MCF 10A (cell line): ENCODE measurements at regions of chr1 and their contacts with region 1.

Region 1: GRCh38 chr1:209565759-209566678 is 17.5 kb upstream of the CAMK1G start:
- DNase-seq: peak; percentile 97
- H3K4me3 Mint-ChIP-seq: peak overlapping the region; percentile 49
- H3K27ac Mint-ChIP-seq: no peak overlapping the region
- H3K4me1 Mint-ChIP-seq: peaks cover 62% of the 10 kb centered on the region
- H3K27me3 Mint-ChIP-seq: peaks cover 3% of the 10 kb centered on the region
- CTCF ChIP-seq: peak; percentile 98

Region 2: DNA sequence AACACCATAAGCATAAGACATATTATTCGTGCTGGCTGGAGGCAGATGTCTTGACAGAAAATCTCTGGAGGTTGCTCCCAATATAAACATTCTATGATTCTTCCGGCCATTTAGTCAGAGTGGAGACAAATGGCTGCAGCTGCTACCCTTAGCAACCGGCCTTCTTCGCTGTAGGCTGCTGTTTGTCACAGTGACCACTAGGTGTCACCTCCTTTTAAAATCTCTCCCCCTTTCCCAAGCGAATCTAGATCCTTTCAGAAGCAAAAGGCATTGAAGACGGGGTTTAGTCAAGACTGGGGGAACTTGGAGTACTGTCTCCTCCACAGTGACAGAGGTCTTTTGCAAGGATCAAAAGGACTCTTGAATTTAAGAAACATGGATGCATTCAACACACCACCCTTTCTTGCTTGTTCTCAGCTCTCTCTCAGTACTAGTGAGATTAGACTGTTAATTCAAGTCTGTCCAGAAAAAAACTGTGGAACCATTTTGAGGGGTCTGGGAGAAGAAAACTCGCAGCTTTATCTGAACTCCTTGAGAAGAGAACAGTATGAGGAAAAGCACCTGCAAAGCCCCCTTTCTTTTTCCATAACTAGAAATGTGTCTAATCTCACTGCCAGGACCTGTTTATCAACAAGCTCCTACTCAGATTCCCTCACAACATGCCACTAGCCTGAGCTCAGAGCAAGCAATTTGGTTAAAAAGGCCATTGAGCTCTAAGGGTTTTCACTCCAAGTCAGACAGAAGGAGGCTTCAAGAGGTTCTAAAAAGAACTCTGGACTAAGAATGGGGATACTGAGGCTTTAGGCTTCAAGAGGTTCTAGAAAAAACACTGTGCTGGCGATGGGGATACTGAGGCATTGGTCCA is 913.5 kb before region 1 on chr1:
- CTCF ChIA-PET with region 1: interaction called, 11 read pairs
- POLR2A ChIA-PET with region 1: no interaction called
- intact Hi-C with region 1: loop called (anchors 5 kb)
- DNase-seq: peak; percentile 83
- H3K4me3 Mint-ChIP-seq: no peak overlapping the region
- H3K27ac Mint-ChIP-seq: no peak overlapping the region
- H3K4me1 Mint-ChIP-seq: peaks cover 13% of the 10 kb centered on the region
- H3K27me3 Mint-ChIP-seq: peaks cover 21% of the 10 kb centered on the region
- CTCF ChIP-seq: peak; percentile 98

Region 3: GRCh38 chr1:209398313-209398991 is 167.6 kb before region 1 on chr1:
- CTCF ChIA-PET with region 1: interaction called, 13 read pairs
- POLR2A ChIA-PET with region 1: interaction called, 24 read pairs
- intact Hi-C with region 1: no loop called
- DNase-seq: peak; percentile 100
- H3K4me3 Mint-ChIP-seq: peak overlapping the region; percentile 29
- H3K27ac Mint-ChIP-seq: peak overlapping the region; percentile 79
- H3K4me1 Mint-ChIP-seq: peaks cover 28% of the 10 kb centered on the region
- H3K27me3 Mint-ChIP-seq: no peaks in the 10 kb centered on the region
- CTCF ChIP-seq: no peak

Region 4: GRCh38 chr1:209443971-209444651 is 121.9 kb before region 1 on chr1:
- CTCF ChIA-PET with region 1: interaction called, 105 read pairs
- POLR2A ChIA-PET with region 1: interaction called, 174 read pairs
- intact Hi-C with region 1: no loop called
- DNase-seq: peak; percentile 54
- H3K4me3 Mint-ChIP-seq: no peak overlapping the region
- H3K27ac Mint-ChIP-seq: peak overlapping the region; percentile 17
- H3K4me1 Mint-ChIP-seq: peaks cover 24% of the 10 kb centered on the region
- H3K27me3 Mint-ChIP-seq: no peaks in the 10 kb centered on the region
- CTCF ChIP-seq: no peak

Region 5: GRCh38 chr1:209527993-209528392 is 38.0 kb before region 1 on chr1:
- CTCF ChIA-PET with region 1: interaction called, 198 read pairs
- POLR2A ChIA-PET with region 1: interaction called, 120 read pairs
- intact Hi-C with region 1: no loop called
- DNase-seq: peak; percentile 36
- H3K4me3 Mint-ChIP-seq: no peak overlapping the region
- H3K27ac Mint-ChIP-seq: peak overlapping the region; percentile 60
- H3K4me1 Mint-ChIP-seq: peaks cover 64% of the 10 kb centered on the region
- H3K27me3 Mint-ChIP-seq: no peaks in the 10 kb centered on the region
- CTCF ChIP-seq: no peak

Region 6: DNA sequence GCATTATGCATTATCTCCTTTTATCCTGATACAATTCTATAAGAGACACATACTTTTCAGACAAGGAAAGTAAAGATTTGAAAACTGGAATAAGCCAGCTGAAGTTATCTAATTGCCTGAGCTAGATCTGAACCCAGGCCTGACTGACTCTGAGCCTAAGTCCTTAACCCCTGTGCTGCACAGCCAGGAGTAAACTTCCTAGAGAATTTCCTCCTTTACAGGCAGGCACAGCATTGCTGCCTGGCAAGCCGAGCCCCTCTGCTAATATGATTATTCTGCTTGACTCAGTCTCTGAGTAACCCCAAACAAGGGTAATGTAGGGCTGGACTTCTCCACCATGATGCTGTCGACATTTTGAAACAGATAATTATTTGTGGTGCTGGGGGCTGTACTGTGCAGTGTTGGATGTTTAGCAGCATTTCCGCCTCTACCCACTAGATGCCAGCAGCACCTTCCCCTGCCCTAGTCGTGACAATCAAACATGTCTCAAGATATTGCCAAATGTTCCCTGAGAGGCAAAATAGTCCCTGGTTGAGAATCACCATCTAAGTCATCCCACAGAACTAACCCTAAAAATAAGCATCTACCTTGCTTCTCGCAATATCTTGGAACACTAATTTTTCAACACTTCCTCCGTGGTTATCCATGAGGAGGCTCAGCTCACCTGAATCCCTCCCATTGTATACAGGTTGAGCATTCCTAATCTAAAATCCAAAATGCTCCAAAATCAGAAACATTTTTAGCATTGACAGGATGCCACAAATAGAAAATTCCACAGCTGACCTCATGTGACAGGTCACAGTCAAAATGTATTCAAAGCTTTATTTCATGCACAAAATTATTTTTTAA is 36.0 kb after region 1 on chr1:
- CTCF ChIA-PET with region 1: interaction called, 198 read pairs
- POLR2A ChIA-PET with region 1: interaction called, 3 read pairs
- intact Hi-C with region 1: no loop called
- DNase-seq: peak; percentile 90
- H3K4me3 Mint-ChIP-seq: no peak overlapping the region
- H3K27ac Mint-ChIP-seq: no peak overlapping the region
- H3K4me1 Mint-ChIP-seq: no peaks in the 10 kb centered on the region
- H3K27me3 Mint-ChIP-seq: no peaks in the 10 kb centered on the region
- CTCF ChIP-seq: peak; percentile 92

Region 7: DNA sequence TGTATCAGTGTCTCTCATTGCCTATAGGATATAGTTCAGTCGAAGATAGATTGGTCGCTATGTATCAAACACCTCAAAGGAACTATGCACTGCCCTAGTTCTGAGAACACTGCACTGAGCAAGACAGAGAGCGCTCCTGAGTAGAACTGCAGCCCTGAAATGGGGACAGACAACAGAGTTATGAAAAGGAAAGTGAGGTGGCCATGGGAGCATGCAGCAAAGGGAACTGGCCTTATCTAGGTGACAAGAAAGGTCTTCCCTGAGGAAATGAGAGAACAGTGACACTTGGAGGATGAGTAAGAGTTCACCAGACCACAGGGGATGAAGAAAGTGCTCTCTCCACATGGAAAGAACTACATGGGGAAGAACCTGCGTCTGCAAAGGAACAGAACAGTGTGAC is 101.7 kb after region 1 on chr1:
- CTCF ChIA-PET with region 1: no interaction called
- POLR2A ChIA-PET with region 1: no interaction called
- intact Hi-C with region 1: no loop called
- DNase-seq: no peak
- H3K4me3 Mint-ChIP-seq: no peak overlapping the region
- H3K27ac Mint-ChIP-seq: no peak overlapping the region
- H3K4me1 Mint-ChIP-seq: peaks cover 21% of the 10 kb centered on the region
- H3K27me3 Mint-ChIP-seq: no peaks in the 10 kb centered on the region
- CTCF ChIP-seq: no peak

Region 8: DNA sequence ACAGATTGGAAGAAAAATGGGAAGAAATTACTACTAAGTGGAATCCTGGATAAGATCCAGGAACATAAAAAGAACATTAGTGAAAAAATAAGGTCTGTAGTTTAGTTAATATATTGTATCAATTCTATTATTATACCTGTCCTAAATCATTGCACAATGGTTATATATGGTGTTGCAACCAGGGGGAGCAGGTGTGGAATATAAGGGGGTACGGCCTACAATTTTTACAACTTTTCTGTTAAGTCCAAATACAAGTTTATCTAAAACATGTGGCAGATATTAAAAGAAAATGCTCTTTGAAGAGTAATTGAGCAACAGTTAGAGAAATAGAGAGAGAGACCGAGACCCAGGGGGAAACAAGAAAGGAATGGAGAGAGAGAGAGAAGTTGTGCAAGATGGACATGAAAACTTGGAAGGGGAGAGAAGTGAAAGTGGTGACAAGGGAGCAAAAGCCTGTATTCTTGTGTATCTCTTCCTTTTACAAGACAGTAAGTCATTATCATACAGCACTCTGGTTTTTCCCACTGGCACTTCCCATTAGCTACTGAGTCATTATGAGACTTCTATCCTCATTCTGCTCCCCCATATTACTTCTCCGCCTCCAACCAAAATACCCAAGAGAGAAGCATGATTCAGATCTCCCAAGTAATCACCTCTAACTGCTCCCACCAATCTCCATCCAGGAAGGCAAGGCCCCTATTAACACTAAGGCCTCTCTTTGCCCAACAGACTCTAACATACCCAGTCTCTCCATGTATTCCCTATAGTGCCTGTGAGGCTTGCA is 167.6 kb after region 1 on chr1:
- CTCF ChIA-PET with region 1: interaction called, 10 read pairs
- POLR2A ChIA-PET with region 1: no interaction called
- intact Hi-C with region 1: no loop called
- DNase-seq: no peak
- H3K4me3 Mint-ChIP-seq: no peak overlapping the region
- H3K27ac Mint-ChIP-seq: no peak overlapping the region
- H3K4me1 Mint-ChIP-seq: peaks cover 4% of the 10 kb centered on the region
- H3K27me3 Mint-ChIP-seq: no peaks in the 10 kb centered on the region
- CTCF ChIP-seq: no peak

Region 9: GRCh38 chr1:210360852-210361477 is 794.9 kb after region 1 on chr1:
- CTCF ChIA-PET with region 1: no interaction called
- POLR2A ChIA-PET with region 1: no interaction called
- intact Hi-C with region 1: no loop called
- DNase-seq: peak; percentile 76
- H3K4me3 Mint-ChIP-seq: no peak overlapping the region
- H3K27ac Mint-ChIP-seq: no peak overlapping the region
- H3K4me1 Mint-ChIP-seq: peaks cover 18% of the 10 kb centered on the region
- H3K27me3 Mint-ChIP-seq: no peaks in the 10 kb centered on the region
- CTCF ChIP-seq: peak; percentile 83